Prostate gland (tissue), 2 donors: ENCODE measurements at regions of chr9 and their contacts with region 1.

Region 1: DNA sequence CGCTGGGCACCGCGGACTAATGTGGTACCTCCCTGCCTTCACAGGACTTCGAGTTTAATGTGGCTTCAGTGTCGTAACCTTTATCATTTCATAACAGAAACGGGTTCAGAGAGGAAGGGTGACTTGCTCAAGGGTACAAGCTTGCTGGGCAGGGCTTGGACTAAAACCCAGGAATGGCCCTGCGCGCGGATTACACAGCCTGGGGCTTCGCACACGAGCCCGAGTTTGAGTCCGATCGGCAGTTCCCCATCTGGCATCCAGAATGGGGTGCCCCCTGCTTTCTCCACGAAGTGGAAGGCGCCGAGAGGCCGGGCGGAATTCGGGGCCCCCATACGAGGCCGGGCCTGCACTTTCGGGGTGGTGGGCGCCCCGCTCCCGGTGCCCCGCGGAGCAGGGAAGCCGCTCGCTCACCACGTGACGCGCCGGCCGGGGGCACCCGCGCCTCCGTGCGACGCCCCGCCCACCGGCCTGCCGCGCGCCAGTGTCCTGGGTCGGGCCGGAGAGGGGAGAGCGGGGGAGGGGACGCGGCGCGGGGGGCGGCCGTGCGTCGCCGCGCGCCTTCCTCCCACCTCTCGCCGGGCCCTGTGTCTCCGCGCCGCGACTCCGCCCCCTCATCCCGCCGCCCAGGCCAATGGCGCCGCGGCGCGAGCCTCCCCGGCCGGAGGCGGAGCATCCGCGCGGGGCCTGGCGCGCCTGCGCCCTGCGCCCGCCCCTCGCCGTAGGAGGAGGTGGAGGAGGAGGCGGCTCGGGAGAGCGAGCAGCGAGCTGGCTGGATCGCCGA is at the start of gene SET:
- DNase-seq: peak; percentile 93
- H3K4me3 ChIP-seq: peak within 1 kb of the TSS; percentile 90 to 100
- H3K27ac ChIP-seq: peak within 1 kb of the TSS; percentile 93 to 98
- H3K4me1 ChIP-seq: peaks cover 9% of the 10 kb centered on the region
- H3K27me3 ChIP-seq: no peaks in the 10 kb centered on the region
- CTCF ChIP-seq: peak in 1 of 4 experiments; percentile 16
- POLR2A ChIP-seq: peak; percentile 96
- total RNA-seq, gene SET: 138 to 150 TPM

Region 2: GRCh38 chr9:128656416-128657343 is 32.0 kb before region 1 on chr9 and contains the start of gene DYNC2I2:
- intact Hi-C with region 1: loop called (anchors 2 kb)
- DNase-seq: peak; percentile 95
- H3K4me3 ChIP-seq: peak within 1 kb of the TSS; percentile 49 to 88
- H3K27ac ChIP-seq: peak within 1 kb of the TSS; percentile 95 to 96
- H3K4me1 ChIP-seq: no peaks in the 10 kb centered on the region
- H3K27me3 ChIP-seq: no peaks in the 10 kb centered on the region
- CTCF ChIP-seq: peak in 2 of 4 experiments; percentile 7 to 26
- POLR2A ChIP-seq: peak; percentile 65
- total RNA-seq, gene DYNC2I2: 66.1 to 80.1 TPM